Caco-2 (cell line): ENCODE measurements at regions of chr4 and their contacts with region 1.

Region 1: DNA sequence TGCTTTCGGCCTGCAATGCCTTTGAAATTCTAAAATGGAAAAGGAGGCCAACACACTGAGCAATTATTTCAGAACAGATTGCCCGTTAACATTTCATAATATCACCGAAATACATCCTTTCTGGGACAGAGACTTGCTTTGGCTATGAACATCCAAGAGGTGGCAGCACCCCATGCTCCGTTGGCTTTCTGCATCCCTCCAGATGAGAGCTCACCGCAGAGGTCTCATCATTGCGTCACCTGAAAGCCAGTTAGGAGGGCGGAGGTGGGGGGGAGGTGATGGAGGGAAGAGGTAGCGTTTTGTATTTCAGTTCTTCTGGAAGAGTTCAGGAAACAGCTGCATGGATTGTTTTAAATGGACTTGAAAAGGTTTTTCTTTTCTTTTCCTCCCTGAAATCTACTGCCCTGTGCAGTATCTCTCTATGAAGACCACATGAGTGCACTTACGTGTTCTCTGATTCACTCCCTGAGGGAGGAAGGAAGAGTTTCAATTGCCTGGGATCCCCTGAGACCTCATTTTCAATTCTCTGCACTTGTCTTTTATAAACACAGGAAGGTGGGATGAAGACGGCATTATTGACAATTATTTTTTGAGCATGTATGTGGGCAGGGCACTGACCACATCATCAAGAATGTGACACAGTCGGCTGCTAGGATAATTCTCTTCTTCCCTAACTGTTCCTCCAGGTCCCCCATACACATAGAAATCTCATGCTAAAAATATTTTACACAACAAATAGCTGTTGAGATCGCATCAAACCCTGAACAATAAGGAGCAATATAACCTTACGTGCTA is 166.9 kb upstream of the PGRMC2 start:
- DNase-seq: peak; percentile 78 to 82
- H3K4me3 ChIP-seq: no peak overlapping the region
- H3K4me3 Mint-ChIP-seq: no peak overlapping the region
- H3K27ac Mint-ChIP-seq: no peak overlapping the region
- H3K4me1 ChIP-seq: no peaks in the 10 kb centered on the region
- H3K4me1 Mint-ChIP-seq: peaks cover 7% of the 10 kb centered on the region
- H3K27me3 ChIP-seq: no peaks in the 10 kb centered on the region
- H3K27me3 Mint-ChIP-seq: no peaks in the 10 kb centered on the region
- CTCF ChIP-seq: peak; percentile 72 to 77

Region 2: DNA sequence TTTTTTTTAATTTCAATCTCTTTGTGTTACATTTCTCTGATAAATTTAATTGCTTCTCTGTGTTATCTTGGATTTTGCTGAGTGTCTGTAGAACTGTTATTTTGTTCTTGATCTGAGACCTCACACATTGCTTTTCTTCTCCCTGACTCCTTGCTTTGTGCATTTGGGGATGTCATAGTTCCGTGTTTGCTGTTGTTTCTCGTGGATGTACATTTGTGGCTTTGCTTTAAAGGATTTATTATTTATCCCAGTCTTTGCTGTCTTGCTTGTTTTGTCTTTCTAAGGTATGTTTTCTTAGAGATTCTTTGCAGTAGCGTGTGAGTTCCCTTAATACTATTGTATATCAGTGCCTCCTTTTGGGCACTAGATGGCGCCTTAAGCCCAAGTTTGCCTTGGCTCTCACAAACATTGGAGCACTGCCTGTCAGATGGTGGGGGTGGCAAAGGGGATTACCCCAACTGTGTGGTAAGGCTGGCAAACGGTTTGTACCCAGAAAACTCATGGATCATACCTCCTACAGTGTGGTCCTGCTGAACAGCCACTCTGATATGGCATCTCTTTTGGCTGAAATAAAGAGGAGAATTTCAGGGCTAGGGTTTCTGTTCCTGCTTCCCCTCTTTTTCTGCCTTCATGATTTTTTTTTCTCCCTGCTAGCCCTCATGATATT is 263.2 kb before region 1 on chr4:
- CTCF ChIA-PET with region 1: interaction called, 3 read pairs
- POLR2A ChIA-PET with region 1: no interaction called
- intact Hi-C with region 1: loop called (anchors 1 kb)
- DNase-seq: peak; percentile 59 to 65
- H3K4me3 ChIP-seq: no peak overlapping the region
- H3K4me3 Mint-ChIP-seq: no peak overlapping the region
- H3K27ac Mint-ChIP-seq: no peak overlapping the region
- H3K4me1 ChIP-seq: 0 out of 2 replicates have a peak, but pooled peaks cover 11% of the 10 kb centered on the region
- H3K4me1 Mint-ChIP-seq: peaks cover 15% of the 10 kb centered on the region
- H3K27me3 ChIP-seq: no peaks in the 10 kb centered on the region
- H3K27me3 Mint-ChIP-seq: no peaks in the 10 kb centered on the region
- CTCF ChIP-seq: peak; percentile 73 to 77

Region 3: DNA sequence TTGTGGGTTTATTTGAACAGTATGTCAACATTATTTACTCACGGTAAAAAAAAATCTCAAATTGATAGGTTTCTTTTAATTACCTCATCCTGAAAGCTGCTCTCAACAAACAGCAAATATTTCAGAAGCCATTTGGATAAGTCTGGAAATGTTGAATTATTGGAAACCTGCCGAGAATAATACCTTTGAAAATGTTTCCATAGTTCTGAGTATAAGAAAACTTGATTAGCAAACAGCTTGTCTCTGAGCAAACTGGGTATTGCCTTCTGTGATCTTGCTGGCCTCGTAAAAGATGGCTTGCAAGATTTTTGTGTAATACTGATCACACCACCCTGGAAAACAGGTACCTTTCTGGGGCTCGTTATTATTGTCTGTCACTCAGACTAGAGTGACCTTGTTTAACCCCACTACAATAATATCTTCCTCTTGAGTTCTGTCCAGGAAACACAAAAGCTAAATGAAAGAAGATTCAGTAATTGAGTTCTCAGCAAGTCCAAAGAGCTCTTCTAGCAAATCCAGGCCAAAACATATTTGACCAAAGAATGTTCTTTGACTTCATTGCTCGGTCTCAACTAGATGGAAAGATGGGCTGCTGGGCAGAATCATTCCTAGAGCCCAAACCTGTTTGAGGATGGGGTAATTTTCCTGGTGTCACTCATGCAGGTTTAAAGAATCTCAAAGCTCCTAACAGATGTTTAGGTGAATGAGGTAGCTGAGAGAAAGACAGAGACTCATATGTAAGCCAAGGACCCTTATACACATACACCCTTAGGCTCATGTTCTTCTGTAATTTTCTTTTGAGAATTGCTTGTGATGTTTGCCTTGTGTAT is 99.4 kb after region 1 on chr4:
- CTCF ChIA-PET with region 1: interaction called, 5 read pairs
- POLR2A ChIA-PET with region 1: interaction called, 10 read pairs
- intact Hi-C with region 1: loop called (anchors 1 kb)
- DNase-seq: peak in 1 of 2 experiments; percentile 25
- H3K4me3 ChIP-seq: peak overlapping the region; percentile 63
- H3K4me3 Mint-ChIP-seq: peak overlapping the region; percentile 99
- H3K27ac Mint-ChIP-seq: peak overlapping the region; percentile 98
- H3K4me1 ChIP-seq: peaks cover 19% of the 10 kb centered on the region
- H3K4me1 Mint-ChIP-seq: peaks cover 11% of the 10 kb centered on the region
- H3K27me3 ChIP-seq: no peaks in the 10 kb centered on the region
- H3K27me3 Mint-ChIP-seq: no peaks in the 10 kb centered on the region
- CTCF ChIP-seq: no peak

Region 4: DNA sequence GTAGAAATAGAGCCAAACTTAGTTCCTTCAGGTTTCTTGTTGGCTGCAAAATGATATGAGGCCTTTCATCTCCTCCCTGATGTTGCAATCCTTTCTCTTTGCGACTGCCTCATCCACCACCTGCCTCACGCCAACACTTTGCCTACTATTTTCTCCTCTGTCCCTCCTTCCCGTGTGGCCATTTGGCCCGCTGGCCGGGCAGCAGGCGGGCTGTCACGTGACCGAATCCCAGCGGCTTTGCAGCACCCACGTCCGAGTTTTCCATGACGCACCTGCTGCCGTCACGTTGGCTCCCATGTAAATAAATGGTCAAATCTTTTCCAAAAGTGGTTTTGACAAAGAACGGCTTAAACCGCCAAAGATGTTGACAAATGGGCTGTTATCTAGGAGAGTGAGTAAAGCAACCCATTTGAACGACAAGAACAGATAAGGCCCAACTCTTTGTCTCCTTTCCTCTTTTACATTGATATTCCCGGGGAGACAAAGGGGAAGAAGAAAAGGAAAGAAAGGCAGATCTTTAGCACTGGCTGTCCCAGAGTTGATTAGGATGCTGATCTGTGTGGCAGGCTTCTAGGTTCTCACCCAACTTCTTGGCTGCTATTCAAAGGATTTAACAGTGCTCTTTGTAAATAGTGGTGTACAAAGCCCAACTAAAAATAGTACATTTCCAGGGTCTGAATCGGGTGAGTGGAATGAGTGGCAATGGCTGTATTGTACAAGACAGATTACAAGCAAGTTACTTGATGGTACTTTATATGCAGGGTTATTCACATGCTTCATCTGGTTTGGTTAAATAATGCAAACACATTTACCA is 180.9 kb after region 1 on chr4:
- CTCF ChIA-PET with region 1: no interaction called
- POLR2A ChIA-PET with region 1: no interaction called
- intact Hi-C with region 1: no loop called
- DNase-seq: peak; percentile 89 to 90
- H3K4me3 ChIP-seq: 0 out of 2 replicates have a peak overlapping the region, but pooled peaks have one; percentile 11
- H3K4me3 Mint-ChIP-seq: peak overlapping the region; percentile 76
- H3K27ac Mint-ChIP-seq: peak overlapping the region; percentile 98
- H3K4me1 ChIP-seq: peaks cover 14% of the 10 kb centered on the region
- H3K4me1 Mint-ChIP-seq: peaks cover 25% of the 10 kb centered on the region
- H3K27me3 ChIP-seq: no peaks in the 10 kb centered on the region
- H3K27me3 Mint-ChIP-seq: no peaks in the 10 kb centered on the region
- CTCF ChIP-seq: no peak

Region 5: GRCh38 chr4:128653517-128654444 is 199.3 kb after region 1 on chr4:
- CTCF ChIA-PET with region 1: no interaction called
- POLR2A ChIA-PET with region 1: no interaction called
- intact Hi-C with region 1: loop called (anchors 5 kb)
- DNase-seq: peak; percentile 79 to 93
- H3K4me3 ChIP-seq: no peak overlapping the region
- H3K4me3 Mint-ChIP-seq: peak overlapping the region; percentile 54
- H3K27ac Mint-ChIP-seq: peak overlapping the region; percentile 73
- H3K4me1 ChIP-seq: peaks cover 54% of the 10 kb centered on the region
- H3K4me1 Mint-ChIP-seq: peaks cover 26% of the 10 kb centered on the region
- H3K27me3 ChIP-seq: no peaks in the 10 kb centered on the region
- H3K27me3 Mint-ChIP-seq: no peaks in the 10 kb centered on the region
- CTCF ChIP-seq: no peak

Region 6: GRCh38 chr4:128863312-128864075 is 409.0 kb after region 1 on chr4:
- CTCF ChIA-PET with region 1: no interaction called
- POLR2A ChIA-PET with region 1: no interaction called
- intact Hi-C with region 1: loop called (anchors 1 kb)
- DNase-seq: peak; percentile 73 to 77
- H3K4me3 ChIP-seq: no peak overlapping the region
- H3K4me3 Mint-ChIP-seq: no peak overlapping the region
- H3K27ac Mint-ChIP-seq: peak overlapping the region; percentile 40
- H3K4me1 ChIP-seq: no peaks in the 10 kb centered on the region; the same call in 1 of the 2 replicates
- H3K4me1 Mint-ChIP-seq: peaks cover 23% of the 10 kb centered on the region
- H3K27me3 ChIP-seq: no peaks in the 10 kb centered on the region
- H3K27me3 Mint-ChIP-seq: no peaks in the 10 kb centered on the region
- CTCF ChIP-seq: peak; percentile 77 to 84

Region 7: DNA sequence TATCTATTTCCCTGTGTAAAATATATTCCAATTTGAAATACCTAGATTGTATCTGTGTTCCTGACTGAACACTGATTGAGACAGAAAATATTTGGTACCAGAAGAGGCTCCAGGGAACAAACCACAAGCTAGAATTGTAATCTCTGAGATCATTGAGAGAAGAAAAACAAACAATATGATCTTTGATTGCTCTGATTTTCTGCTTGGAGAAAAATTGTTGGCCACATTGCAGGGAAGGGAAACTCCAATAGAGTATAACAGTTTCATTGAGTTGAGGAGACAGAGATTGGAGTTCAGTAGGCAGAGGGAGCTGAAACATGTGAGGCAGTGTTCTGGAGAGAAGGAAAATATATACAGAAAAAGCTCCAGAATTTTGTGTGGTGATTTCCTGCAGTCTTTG is 799.6 kb after region 1 on chr4:
- CTCF ChIA-PET with region 1: no interaction called
- POLR2A ChIA-PET with region 1: no interaction called
- intact Hi-C with region 1: no loop called
- DNase-seq: no peak
- H3K4me3 ChIP-seq: no peak overlapping the region
- H3K4me3 Mint-ChIP-seq: no peak overlapping the region
- H3K27ac Mint-ChIP-seq: no peak overlapping the region
- H3K4me1 ChIP-seq: no peaks in the 10 kb centered on the region
- H3K4me1 Mint-ChIP-seq: no peaks in the 10 kb centered on the region
- H3K27me3 ChIP-seq: no peaks in the 10 kb centered on the region
- H3K27me3 Mint-ChIP-seq: no peaks in the 10 kb centered on the region
- CTCF ChIP-seq: no peak